Heart right ventricle (tissue), 16 donors: ENCODE measurements at regions of chr15 and their contacts with region 1.

Region 1: DNA sequence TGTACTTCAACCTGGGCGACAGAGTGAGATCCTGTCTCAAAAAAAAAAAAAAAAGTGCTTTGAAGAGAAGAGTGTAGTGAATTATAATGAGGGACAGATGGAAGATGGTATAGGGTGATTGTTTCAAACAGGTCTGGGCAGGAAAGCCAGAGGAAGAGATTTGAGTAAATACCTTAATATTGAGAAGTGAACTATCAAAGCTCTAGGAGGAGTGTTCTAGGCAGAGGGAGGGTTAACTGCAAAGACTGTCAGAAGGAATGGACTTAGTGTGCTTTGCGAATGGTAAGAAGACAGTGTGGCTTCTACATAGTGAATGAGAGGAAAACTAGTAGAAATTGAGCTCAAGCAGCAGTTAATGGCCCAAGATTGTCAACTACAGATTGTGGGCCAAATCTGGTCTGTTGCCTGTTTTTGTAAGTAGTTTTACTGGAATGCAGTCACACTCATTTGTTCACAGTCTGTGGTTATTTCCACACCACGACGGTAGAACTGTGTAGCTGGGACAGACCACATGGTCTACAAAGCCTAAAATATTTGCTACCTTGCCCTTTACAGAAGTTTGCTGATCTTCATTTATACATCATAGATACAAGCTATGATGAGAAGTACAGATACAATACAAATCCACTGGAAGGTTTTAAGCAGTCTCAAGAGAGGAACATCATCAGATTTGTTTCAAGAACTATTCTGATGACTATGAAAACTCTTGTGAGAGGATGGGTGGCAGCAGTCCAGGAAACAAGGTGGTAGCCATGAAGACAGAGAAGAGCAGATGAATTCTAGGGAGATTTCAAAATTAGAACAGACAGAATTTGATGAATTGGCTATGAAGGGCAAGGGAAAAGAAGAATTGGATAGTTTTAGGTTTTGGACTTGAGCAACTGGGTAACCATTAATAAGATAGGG is 16.5 kb upstream of the USP50 start:
- DNase-seq: no peak
- ATAC-seq: peak in 1 of 8 donors; percentile 30
- H3K4me3 ChIP-seq: no peak overlapping the region
- H3K27ac ChIP-seq: no peak overlapping the region
- H3K4me1 ChIP-seq: no peaks in the 10 kb centered on the region
- H3K27me3 ChIP-seq: no peaks in the 10 kb centered on the region
- CTCF ChIP-seq: no peak

Region 2: GRCh38 chr15:50484781-50485180 is 78.2 kb before region 1 on chr15:
- intact Hi-C with region 1: loop called in 1 of 10 experiments (anchors 5 kb)
- DNase-seq: no peak
- ATAC-seq: no peak
- H3K4me3 ChIP-seq: no peak overlapping the region
- H3K27ac ChIP-seq: no peak overlapping the region
- H3K4me1 ChIP-seq: no peaks in the 10 kb centered on the region
- H3K27me3 ChIP-seq: no peaks in the 10 kb centered on the region
- CTCF ChIP-seq: no peak

Region 3: DNA sequence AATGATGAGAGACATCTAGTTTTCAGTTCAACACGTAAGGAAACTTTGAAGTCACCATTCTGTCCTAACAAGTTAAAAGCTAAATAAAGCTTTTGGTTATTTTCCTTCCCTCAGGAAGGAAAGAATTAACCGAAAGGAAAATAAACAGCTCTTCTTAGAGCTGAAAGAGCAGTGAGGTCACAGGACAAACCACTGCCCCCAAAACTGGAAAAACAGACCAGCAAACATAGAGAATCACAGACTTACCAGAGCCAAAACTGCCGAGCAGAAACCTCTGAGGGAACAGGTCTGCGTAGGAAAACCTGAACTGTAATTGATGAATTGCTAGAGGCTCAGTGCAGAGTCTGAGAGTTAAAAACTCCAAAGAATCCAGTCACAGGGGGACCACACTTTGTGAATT is 31.2 kb before region 1 on chr15:
- intact Hi-C with region 1: no loop called
- DNase-seq: no peak
- ATAC-seq: no peak
- H3K4me3 ChIP-seq: no peak overlapping the region
- H3K27ac ChIP-seq: no peak overlapping the region
- H3K4me1 ChIP-seq: no peaks in the 10 kb centered on the region
- H3K27me3 ChIP-seq: no peaks in the 10 kb centered on the region
- CTCF ChIP-seq: no peak

Region 4: GRCh38 chr15:50605462-50605861 is 42.5 kb after region 1 on chr15:
- intact Hi-C with region 1: loop called in 1 of 10 experiments (anchors 10 kb)
- DNase-seq: no peak
- ATAC-seq: no peak
- H3K4me3 ChIP-seq: no peak overlapping the region
- H3K27ac ChIP-seq: no peak overlapping the region
- H3K4me1 ChIP-seq: no peaks in the 10 kb centered on the region
- H3K27me3 ChIP-seq: no peaks in the 10 kb centered on the region
- CTCF ChIP-seq: no peak

Region 5: GRCh38 chr15:50653156-50653745 is 90.3 kb after region 1 on chr15:
- intact Hi-C with region 1: no loop called
- DNase-seq: no peak
- ATAC-seq: no peak
- H3K4me3 ChIP-seq: no peak overlapping the region
- H3K27ac ChIP-seq: no peak overlapping the region
- H3K4me1 ChIP-seq: no peaks in the 10 kb centered on the region
- H3K27me3 ChIP-seq: no peaks in the 10 kb centered on the region
- CTCF ChIP-seq: no peak